Heart left ventricle (tissue), 16 donors: ENCODE measurements at regions of chr16 and their contacts with region 1.

Region 1: GRCh38 chr16:23435500-23435899 is 17.5 kb downstream of the COG7 start:
- DNase-seq: peak in 4 of 5 donors; percentile 21 to 71 (median 36)
- ATAC-seq: peak; percentile 58 to 82 (median 76)
- H3K4me3 ChIP-seq: no peak overlapping the region
- H3K27ac ChIP-seq: peak overlapping the region in 1 of 12 donors; percentile 33
- H3K4me1 ChIP-seq: peaks cover 0 to 12% (median 0%) of the 10 kb centered on the region in 12 donors
- H3K27me3 ChIP-seq: no peaks in the 10 kb centered on the region
- CTCF ChIP-seq: peak; percentile 49 to 88 (median 74)
- POLR2A ChIP-seq: no peak

Region 2: DNA sequence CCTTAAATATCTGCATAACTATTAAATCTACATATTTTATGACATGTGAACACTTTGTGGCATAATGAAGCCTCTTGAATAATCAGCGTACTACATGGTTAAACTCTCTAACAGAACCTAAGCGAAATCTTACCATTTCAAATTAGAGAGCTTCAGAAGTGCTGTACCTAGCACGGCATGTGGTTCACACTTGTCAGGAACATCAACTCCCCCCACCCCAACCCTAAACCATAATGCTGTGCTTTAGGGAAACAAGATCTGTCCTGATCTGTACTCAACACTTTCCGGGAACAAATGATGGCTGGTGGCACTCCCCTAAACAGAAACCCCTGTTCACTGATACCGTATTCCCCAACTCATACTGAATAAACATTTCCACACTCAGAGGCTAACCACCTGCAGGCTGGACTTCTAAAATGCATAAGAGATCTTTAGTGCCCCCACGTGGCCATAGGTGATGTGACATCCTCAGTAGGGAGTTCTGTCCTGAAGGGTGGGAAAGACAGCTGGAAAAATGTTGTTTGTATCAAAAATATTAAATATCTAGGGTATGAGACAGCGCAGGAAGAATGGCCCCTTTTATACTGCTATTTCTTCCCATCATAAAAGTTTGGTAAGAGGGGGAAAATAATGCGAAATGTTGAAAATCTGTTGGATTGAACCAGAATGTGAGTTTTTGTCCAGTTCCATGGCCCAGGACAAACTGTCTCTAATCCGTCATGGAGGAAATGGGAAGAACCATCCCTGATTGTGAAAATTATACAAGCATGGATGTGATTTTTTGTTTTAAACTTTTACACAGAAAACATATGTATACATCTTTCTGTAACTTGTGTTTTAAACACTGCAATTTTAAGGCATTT is 374.8 kb before region 1 on chr16:
- intact Hi-C with region 1: loop called in 4 of 10 experiments (anchors 5 to 10 kb)
- DNase-seq: peak in 4 of 5 donors; percentile 57 to 73 (median 60)
- ATAC-seq: peak; percentile 57 to 84 (median 79)
- H3K4me3 ChIP-seq: no peak overlapping the region
- H3K27ac ChIP-seq: no peak overlapping the region
- H3K4me1 ChIP-seq: peaks cover 0 to 14% (median 5%) of the 10 kb centered on the region in 12 donors
- H3K27me3 ChIP-seq: peaks cover 0 to 3% (median 0%) of the 10 kb centered on the region in 9 donors
- CTCF ChIP-seq: peak; percentile 70 to 87 (median 82)
- POLR2A ChIP-seq: no peak

Region 3: GRCh38 chr16:23302045-23302956 is 133.2 kb before region 1 on chr16 and contains the start of gene SCNN1B:
- intact Hi-C with region 1: no loop called
- DNase-seq: no peak
- ATAC-seq: peak in 2 of 4 donors; percentile 31 to 41
- H3K4me3 ChIP-seq: peak within 1 kb of the TSS in 10 of 12 donors; percentile 12 to 35 (median 18)
- H3K27ac ChIP-seq: no peak within 1 kb of the TSS
- H3K4me1 ChIP-seq: peaks cover 0 to 11% (median 0%) of the 10 kb centered on the region in 12 donors
- H3K27me3 ChIP-seq: peaks cover 8 to 48% (median 29%) of the 10 kb centered on the region in 9 donors
- CTCF ChIP-seq: no peak
- POLR2A ChIP-seq: no peak
- total RNA-seq, gene SCNN1B: 0.27 to 1.1 (median 0.71) TPM in 3 of 9 donors, not detected in the others

Region 4: DNA sequence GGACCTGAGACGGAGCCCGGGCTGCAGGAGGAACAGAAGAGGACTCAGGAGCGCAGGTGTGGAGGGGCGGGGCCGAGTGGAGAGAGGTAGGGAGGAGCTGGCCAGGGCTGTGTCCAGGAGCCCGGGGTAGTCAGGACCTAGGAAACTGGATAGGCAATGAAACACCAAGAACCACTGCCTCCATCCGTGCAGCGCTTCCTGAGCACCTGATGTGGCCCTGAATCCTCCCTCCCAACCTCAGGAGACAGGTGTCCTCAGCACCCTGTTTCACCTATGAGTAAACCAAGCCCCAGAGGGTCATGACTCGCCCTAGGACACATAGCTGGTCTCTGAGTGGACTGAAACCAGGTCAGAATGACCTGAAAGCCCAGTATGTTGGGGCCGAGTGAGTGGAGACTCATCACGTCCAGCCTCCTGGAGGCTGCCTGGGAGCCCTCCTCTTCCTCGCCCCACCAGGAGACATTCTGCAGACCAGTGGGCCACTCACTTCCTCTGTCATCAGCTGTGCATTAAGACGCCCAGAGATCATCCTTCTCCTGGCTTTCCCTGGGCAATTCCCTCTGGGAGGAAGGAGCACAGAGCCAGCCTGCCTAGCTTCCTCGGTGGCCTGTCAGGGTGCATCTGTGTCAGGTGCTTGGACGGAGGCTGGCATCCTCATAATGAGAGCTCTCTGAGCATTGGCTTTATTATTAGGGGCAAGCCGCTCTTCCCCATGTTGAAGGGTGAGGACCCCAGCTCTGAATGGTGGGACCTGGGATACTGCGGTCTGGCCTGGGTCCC is 60.6 kb before region 1 on chr16:
- intact Hi-C with region 1: loop called in 1 of 10 experiments (anchors 10 kb)
- DNase-seq: no peak
- ATAC-seq: no peak
- H3K4me3 ChIP-seq: no peak overlapping the region
- H3K27ac ChIP-seq: no peak overlapping the region
- H3K4me1 ChIP-seq: no peaks in the 10 kb centered on the region
- H3K27me3 ChIP-seq: peaks cover 0 to 18% (median 0%) of the 10 kb centered on the region in 9 donors
- CTCF ChIP-seq: no peak
- POLR2A ChIP-seq: no peak

Region 5: DNA sequence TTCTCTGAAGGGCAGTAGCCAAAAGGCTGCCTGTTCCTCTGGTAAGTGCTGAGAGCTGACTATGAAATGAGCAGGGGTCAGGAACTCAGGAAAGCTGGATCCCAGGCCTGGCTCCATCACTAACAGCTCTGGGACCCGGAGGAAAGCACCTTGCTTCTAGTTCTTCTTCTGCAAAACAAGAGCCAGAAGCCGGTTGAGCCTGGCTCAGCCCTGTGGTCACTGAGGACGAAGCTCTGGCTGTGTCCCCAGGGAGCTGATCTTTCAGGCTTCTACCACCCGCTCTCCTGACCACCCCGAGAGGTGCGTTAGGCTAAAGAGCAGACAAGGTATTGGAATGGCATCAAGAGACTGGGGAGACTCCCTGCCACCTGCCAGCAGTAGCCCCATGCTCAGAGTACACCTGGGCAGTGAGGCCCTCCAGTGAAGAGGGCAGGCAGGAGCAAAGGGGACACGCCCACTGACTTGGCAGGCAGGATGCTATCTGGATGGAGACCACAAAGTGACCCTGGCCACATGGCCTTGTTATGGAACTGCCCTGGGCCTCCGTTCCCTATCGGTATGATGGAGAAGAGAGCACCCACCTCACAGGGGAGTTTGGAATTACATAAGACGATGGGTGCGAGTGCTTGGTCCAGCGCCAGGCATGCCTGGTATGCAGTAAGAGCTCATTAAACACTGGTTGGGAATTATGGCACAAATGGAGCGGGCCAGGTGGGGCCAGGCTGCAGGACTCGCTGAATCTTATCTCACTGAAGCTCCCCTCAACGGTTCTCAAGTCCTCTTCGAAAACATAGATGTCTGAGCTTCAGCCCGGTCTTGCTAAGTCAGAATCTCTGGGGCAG is 43.9 kb before region 1 on chr16:
- intact Hi-C with region 1: loop called in 1 of 10 experiments (anchors 1 kb)
- DNase-seq: no peak
- ATAC-seq: no peak
- H3K4me3 ChIP-seq: no peak overlapping the region
- H3K27ac ChIP-seq: peak overlapping the region in 1 of 12 donors; percentile 63
- H3K4me1 ChIP-seq: peaks cover 0 to 18% (median 8%) of the 10 kb centered on the region in 12 donors
- H3K27me3 ChIP-seq: no peaks in the 10 kb centered on the region
- CTCF ChIP-seq: no peak
- POLR2A ChIP-seq: no peak